Right lobe of liver (tissue), 6 donors: ENCODE measurements at regions of chr19 and their contacts with region 1.

Region 1: DNA sequence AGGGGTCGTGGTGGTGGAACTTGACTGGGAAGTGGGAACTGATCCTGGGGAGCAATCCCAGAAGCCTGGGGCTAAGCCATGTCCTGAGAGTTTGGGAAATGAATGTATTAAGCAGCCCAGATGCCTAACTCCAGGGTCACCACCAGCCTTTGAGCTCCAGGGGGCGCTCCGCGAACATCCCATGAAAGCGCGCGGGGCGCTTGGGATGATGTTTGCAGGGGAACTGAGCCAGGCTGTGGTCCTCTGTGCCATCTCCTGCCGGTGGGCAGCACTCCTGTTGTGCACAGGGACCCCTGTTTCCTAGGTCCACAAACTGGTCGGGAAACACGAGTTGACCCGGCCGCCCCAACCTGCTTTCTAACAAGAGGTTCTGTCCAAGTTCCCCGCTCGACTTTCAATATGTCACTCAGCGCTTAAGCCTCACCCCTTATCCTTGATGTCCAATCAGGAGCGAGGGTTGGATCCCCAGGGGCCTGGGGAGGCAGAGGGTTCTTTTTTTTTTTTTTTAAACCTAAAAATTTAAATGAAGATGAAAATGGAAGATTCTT is 14.4 kb downstream of the LEUTX start:
- DNase-seq: peak; percentile 73 to 74 (median 74)
- ATAC-seq: peak; percentile 97 to 99 (median 98)
- H3K4me3 ChIP-seq: peak overlapping the region; percentile 27 to 53 (median 37)
- H3K27ac ChIP-seq: no peak overlapping the region
- H3K4me1 ChIP-seq: no peaks in the 10 kb centered on the region
- H3K27me3 ChIP-seq: no peaks in the 10 kb centered on the region
- CTCF ChIP-seq: peak; percentile 82 to 91 (median 89)
- POLR2A ChIP-seq: no peak

Region 2: DNA sequence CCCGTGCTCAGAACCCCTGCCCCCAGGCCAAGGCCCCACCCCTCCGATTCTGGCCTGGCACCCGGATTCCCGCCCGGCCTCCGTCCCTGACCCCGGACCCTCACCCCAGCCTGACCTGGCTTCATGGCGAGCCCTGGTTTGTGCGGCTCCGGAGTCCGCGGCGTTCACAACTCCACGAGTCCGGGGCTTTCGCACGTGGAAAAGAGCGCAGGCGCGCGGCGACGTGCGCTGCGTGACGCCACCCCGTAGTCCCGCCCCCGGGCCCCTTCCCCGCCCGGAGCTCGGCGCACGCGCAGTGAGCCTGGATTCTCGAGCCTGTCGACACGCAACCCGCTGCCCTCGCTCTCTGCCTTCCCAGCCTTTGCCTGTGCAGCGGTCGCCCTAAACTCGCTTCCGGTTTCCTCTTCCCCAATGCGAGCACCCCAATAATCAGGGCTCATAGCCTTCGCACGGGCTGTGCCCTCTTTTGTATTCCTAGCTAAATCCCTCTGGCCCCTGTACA is 53.2 kb after region 1 on chr19 and contains the start of gene FBL:
- intact Hi-C with region 1: loop called in 1 of 2 experiments (anchors 10 kb)
- DNase-seq: peak; percentile 97 to 99 (median 98)
- ATAC-seq: peak; percentile 94 to 98 (median 94)
- H3K4me3 ChIP-seq: peak within 1 kb of the TSS; percentile 84 to 95 (median 86)
- H3K27ac ChIP-seq: peak within 1 kb of the TSS; percentile 9 to 72 (median 58)
- H3K4me1 ChIP-seq: peaks cover 0 to 20% (median 6%) of the 10 kb centered on the region in 4 donors
- H3K27me3 ChIP-seq: no peaks in the 10 kb centered on the region
- CTCF ChIP-seq: no peak
- POLR2A ChIP-seq: peak; percentile 70
- total RNA-seq, gene FBL: 46.1 to 76.2 (median 51.4) TPM